Endothelial cell of umbilical vein (primary cell): ENCODE measurements at regions of chr4 and their contacts with region 1.

Region 1: DNA sequence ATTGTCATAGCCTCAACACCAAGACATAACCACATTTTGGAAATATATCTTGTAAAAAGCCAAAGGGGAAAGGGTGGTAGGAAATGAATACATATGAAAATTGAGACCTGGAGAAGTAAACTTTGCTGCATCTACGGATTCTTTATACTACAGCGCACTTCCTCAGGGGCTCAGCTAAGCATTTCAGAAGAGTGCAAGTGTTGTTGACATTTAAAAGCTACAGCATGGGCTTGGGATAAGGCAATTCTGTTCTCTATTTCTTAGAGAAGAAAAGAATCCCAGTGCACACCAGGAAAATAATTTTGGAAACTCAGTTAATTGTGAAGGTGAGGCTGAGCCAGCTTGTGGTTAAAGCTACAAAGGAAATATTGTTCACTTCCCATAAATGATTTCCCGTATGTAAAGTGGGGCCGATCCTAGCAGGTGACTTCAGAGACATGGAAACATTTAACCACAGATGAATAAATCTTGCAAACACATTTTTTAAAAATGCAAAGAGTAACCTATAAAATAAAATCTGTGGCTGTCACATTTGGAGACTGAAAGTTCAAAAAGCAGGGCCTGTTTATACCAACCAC is 12.6 kb upstream of the GBA3 start:
- DNase-seq: no peak
- H3K4me3 ChIP-seq: no peak overlapping the region
- H3K27ac ChIP-seq: no peak overlapping the region
- H3K4me1 ChIP-seq: no peaks in the 10 kb centered on the region
- H3K27me3 ChIP-seq: no peaks in the 10 kb centered on the region
- CTCF ChIP-seq: no peak
- POLR2A ChIP-seq: no peak

Region 2: DNA sequence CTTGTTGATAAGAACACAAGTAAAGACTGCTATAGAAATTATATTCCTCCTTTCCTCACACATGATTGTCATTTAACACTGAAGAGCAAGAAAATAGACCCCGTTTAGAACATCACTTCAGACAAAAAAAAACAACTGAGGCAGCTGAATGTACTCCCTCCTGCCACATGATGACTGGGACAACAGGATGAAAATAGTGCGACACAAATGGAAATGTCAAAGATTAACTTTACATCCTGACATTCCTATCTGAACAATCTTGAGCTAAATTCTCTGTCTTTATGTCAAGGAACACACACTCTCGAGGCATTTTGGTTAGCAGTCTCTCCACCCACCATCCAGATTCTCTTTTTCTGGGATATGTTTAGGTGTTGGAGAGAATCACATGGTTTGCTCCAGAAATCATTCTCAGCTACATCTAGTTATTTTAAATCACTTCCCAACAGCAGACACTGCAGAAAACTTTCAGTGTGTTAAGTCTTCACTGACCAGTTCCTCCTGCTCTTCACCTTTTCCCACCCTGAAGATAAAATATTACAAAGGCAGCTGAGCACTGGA is 715.3 kb before region 1 on chr4:
- CTCF ChIA-PET with region 1: no interaction called
- POLR2A ChIA-PET with region 1: no interaction called
- dilution Hi-C with region 1: no loop called
- intact Hi-C with region 1: loop called (anchors 5 kb)
- DNase-seq: no peak
- H3K4me3 ChIP-seq: no peak overlapping the region
- H3K27ac ChIP-seq: no peak overlapping the region
- H3K4me1 ChIP-seq: no peaks in the 10 kb centered on the region
- H3K27me3 ChIP-seq: no peaks in the 10 kb centered on the region
- CTCF ChIP-seq: no peak
- POLR2A ChIP-seq: no peak

Region 3: GRCh38 chr4:22719218-22719617 is 39.1 kb after region 1 on chr4:
- CTCF ChIA-PET with region 1: no interaction called
- POLR2A ChIA-PET with region 1: no interaction called
- dilution Hi-C with region 1: no loop called
- intact Hi-C with region 1: no loop called
- DNase-seq: no peak
- H3K4me3 ChIP-seq: no peak overlapping the region
- H3K27ac ChIP-seq: no peak overlapping the region
- H3K4me1 ChIP-seq: no peaks in the 10 kb centered on the region
- H3K27me3 ChIP-seq: no peaks in the 10 kb centered on the region
- CTCF ChIP-seq: no peak
- POLR2A ChIP-seq: no peak

Region 4: GRCh38 chr4:22794732-22795131 is 114.6 kb after region 1 on chr4:
- CTCF ChIA-PET with region 1: no interaction called
- POLR2A ChIA-PET with region 1: no interaction called
- dilution Hi-C with region 1: no loop called
- intact Hi-C with region 1: no loop called
- DNase-seq: no peak
- H3K4me3 ChIP-seq: no peak overlapping the region
- H3K27ac ChIP-seq: no peak overlapping the region
- H3K4me1 ChIP-seq: no peaks in the 10 kb centered on the region
- H3K27me3 ChIP-seq: no peaks in the 10 kb centered on the region
- CTCF ChIP-seq: no peak
- POLR2A ChIP-seq: no peak

Region 5: GRCh38 chr4:22978656-22979055 is 298.5 kb after region 1 on chr4:
- CTCF ChIA-PET with region 1: no interaction called
- POLR2A ChIA-PET with region 1: no interaction called
- dilution Hi-C with region 1: no loop called
- intact Hi-C with region 1: no loop called
- DNase-seq: no peak
- H3K4me3 ChIP-seq: no peak overlapping the region
- H3K27ac ChIP-seq: no peak overlapping the region
- H3K4me1 ChIP-seq: no peaks in the 10 kb centered on the region
- H3K27me3 ChIP-seq: no peaks in the 10 kb centered on the region
- CTCF ChIP-seq: no peak
- POLR2A ChIP-seq: no peak

Region 6: GRCh38 chr4:23889814-23890341 is 1209.7 kb after region 1 on chr4 and contains the start of gene PPARGC1A:
- CTCF ChIA-PET with region 1: no interaction called
- POLR2A ChIA-PET with region 1: no interaction called
- dilution Hi-C with region 1: no loop called
- intact Hi-C with region 1: no loop called
- DNase-seq: no peak
- H3K4me3 ChIP-seq: no peak within 1 kb of the TSS
- H3K27ac ChIP-seq: no peak within 1 kb of the TSS
- H3K4me1 ChIP-seq: no peaks in the 10 kb centered on the region
- H3K27me3 ChIP-seq: no peaks in the 10 kb centered on the region
- CTCF ChIP-seq: no peak
- POLR2A ChIP-seq: no peak
- total RNA-seq, gene PPARGC1A: not detected in 2 replicates